ENCODE measurements at regions of chr20 and their contacts with region 1.

Region 1: GRCh38 chr20:10434467-10434831 is 427 bp upstream of the MKKS start:
- DNase-seq: peak; percentile 93
- ATAC-seq: peak; percentile 90 to 92

Region 2: DNA sequence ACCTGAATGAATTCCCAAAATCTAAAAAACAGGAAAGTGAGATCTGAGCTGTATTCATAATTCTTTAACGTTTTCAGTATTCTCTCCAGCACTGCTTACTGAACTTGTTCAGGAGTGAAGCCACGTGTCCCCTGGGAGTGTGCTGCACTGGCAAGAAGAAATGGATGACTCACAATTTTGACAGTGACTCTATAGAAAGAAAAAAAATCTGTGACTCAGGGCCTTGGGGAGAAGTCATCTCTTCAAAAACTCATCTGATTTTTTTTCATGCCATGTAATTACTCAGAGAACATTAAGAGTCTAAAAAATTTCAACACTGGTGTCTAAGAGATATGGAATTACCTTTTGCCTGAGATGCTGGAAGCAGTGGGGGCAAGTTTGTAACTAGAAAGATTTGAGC is 359.9 kb before region 1 on chr20:
- intact Hi-C with region 1: no loop called
- DNase-seq: peak; percentile 41
- ATAC-seq: peak in 1 of 2 donors; percentile 78

Region 3: DNA sequence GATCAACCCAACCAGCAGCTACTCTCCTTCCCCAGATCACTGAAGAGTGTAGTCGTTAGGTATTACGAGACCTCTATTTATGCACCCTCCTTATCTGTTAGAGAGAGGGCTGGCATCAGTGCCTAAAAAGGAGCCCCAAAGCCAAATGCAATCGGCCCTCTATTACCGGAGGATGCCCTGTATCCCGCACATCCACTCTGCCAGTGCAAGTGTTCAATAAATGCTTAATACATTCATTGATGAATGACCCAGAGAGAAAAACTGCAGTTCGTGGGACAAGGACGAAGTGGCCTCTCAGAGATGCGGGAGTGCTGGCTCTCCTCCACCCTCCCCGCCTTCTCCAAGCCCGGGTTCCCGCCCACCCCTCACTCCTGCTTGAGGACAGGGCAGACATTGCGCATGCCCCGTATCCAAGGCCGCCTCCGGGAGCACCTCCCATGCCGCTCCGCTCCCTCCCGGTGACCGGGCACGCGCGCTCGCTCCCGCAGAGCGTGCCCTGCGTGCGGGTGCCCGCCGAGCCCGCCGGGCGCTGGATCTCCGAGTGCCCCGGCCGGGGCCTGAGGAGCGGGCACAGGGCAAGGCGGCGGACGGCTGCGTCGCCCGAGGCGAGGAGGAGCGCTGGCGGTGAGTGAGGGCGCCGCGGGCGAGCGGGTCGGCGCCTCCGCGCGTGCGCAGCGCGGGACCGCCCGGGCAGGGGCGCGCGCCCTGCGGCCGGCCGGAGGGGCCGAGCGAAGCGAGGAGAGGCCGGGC is 1456.1 kb after region 1 on chr20:
- intact Hi-C with region 1: loop called in 1 of 2 experiments (anchors 10 kb)
- DNase-seq: peak; percentile 93
- ATAC-seq: peak; percentile 96 to 98